ENCODE measurements at regions of chr16 and their contacts with region 1.

Region 1: GRCh38 chr16:50313596-50314478 is 47.5 kb downstream of the ADCY7 start:
- DNase-seq: no peak
- H3K4me3 ChIP-seq: no peak overlapping the region
- H3K27ac ChIP-seq: peak overlapping the region in 1 of 2 experiments; percentile 16; a peak in 1 of 4 replicates
- H3K4me1 ChIP-seq: peaks cover 0 to 52% of the 10 kb centered on the region in 2 experiments; a peak in 2 of 4 replicates
- H3K27me3 ChIP-seq: no peaks in the 10 kb centered on the region
- CTCF ChIP-seq: no peak
- EP300 ChIP-seq: no peak
- RAD21 ChIP-seq: no peak

Region 2: GRCh38 chr16:50301626-50302471 is 12.0 kb before region 1 on chr16:
- CTCF ChIA-PET with region 1: interaction called, 10 read pairs
- POLR2A ChIA-PET with region 1: interaction called, 5 read pairs
- DNase-seq: peak; percentile 27
- H3K4me3 ChIP-seq: no peak overlapping the region
- H3K27ac ChIP-seq: no peak overlapping the region
- H3K4me1 ChIP-seq: peaks cover 0 to 17% of the 10 kb centered on the region in 2 experiments; a peak in 1 of 4 replicates
- H3K27me3 ChIP-seq: no peaks in the 10 kb centered on the region
- CTCF ChIP-seq: no peak
- EP300 ChIP-seq: no peak
- RAD21 ChIP-seq: no peak

Region 3: DNA sequence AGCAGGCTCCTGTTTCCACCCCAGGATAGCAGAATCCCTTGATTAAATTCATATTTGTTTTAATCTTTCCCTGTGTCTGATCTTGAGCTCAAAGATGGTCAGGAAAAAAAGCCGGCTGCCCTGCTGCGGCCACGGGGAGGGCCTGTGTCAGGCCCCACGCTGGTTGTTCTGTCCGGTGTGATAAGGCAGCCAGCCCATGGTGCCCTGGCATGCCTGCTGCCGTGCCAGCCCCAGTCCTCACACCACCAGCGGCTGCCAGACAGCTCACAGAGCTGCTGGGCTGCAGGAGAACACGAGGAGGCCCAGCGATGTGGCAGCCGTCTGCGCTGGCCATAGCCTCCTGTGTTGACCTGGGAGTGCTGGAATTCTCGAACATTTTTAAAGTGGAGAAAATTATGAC is 89.7 kb after region 1 on chr16:
- CTCF ChIA-PET with region 1: no interaction called
- POLR2A ChIA-PET with region 1: no interaction called
- DNase-seq: peak; percentile 72
- H3K4me3 ChIP-seq: no peak overlapping the region
- H3K27ac ChIP-seq: peak overlapping the region in 1 of 2 experiments; percentile 81; a peak in 2 of 4 replicates
- H3K4me1 ChIP-seq: peaks cover 0 to 25% of the 10 kb centered on the region in 2 experiments; a peak in 1 of 4 replicates
- H3K27me3 ChIP-seq: no peaks in the 10 kb centered on the region
- CTCF ChIP-seq: no peak
- EP300 ChIP-seq: no peak; a peak in 1 of 4 replicates
- RAD21 ChIP-seq: 0 out of 2 replicates have a peak, but pooled peaks have one; percentile 2

Region 4: GRCh38 chr16:50419116-50419515 is 105.3 kb after region 1 on chr16:
- CTCF ChIA-PET with region 1: no interaction called
- POLR2A ChIA-PET with region 1: no interaction called
- DNase-seq: no peak
- H3K4me3 ChIP-seq: no peak overlapping the region
- H3K27ac ChIP-seq: no peak overlapping the region
- H3K4me1 ChIP-seq: peaks cover 0 to 8% of the 10 kb centered on the region in 2 experiments; a peak in 1 of 4 replicates
- H3K27me3 ChIP-seq: no peaks in the 10 kb centered on the region
- CTCF ChIP-seq: no peak
- EP300 ChIP-seq: no peak
- RAD21 ChIP-seq: no peak